Psoas muscle (tissue), 8 donors: ENCODE measurements at regions of chrX and their contacts with region 1.

Region 1: DNA sequence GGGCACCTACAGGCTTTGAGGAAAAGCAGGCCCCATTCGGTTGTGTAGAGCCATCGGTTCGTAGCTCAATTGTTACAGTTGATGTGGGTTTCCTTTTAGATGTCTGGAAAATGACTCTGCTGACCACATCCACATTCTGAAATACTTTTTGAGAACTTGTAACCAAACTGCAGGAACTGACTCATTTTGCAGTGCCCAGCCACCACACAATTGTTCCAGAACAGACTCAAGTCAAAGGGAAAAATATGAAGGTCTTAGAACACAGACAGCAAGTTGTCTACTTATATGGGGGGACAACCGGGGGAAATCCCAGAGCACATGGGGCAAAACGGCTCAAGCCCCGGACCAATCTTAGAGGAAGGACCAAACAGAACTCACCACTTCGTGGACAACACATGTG is 557.6 kb upstream of the DIPK2B start:
- DNase-seq: no peak
- ATAC-seq: no peak
- H3K4me3 ChIP-seq: no peak overlapping the region
- H3K27ac ChIP-seq: no peak overlapping the region
- H3K4me1 ChIP-seq: no peaks in the 10 kb centered on the region
- H3K27me3 ChIP-seq: no peaks in the 10 kb centered on the region
- CTCF ChIP-seq: no peak

Region 2: DNA sequence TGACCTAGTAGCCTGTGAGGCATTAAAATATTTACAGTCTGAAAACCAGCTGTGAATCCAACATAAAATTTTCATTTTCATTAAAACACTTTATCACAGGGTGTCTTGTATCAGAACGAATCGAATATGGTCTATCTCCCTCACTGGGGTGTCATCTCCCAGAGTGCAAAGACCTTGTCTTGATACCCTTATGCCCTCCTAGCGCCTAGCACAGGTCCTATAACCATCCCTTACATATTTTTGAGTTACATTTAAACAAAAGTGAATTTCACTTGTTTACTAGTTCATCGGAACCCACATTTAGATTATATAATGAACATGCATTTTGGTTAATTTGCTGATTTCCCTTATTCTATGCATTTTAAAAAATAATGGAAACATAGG is 571.7 kb before region 1 on chrX:
- intact Hi-C with region 1: loop called in 1 of 2 experiments (anchors 10 kb)
- DNase-seq: no peak
- ATAC-seq: peak in 2 of 4 donors; percentile 5 to 24
- H3K4me3 ChIP-seq: no peak overlapping the region
- H3K27ac ChIP-seq: no peak overlapping the region
- H3K4me1 ChIP-seq: no peaks in the 10 kb centered on the region
- H3K27me3 ChIP-seq: no peaks in the 10 kb centered on the region
- CTCF ChIP-seq: no peak

Region 3: GRCh38 chrX:45537936-45538335 is 220.4 kb before region 1 on chrX:
- intact Hi-C with region 1: no loop called
- DNase-seq: no peak
- ATAC-seq: no peak
- H3K4me3 ChIP-seq: no peak overlapping the region
- H3K27ac ChIP-seq: no peak overlapping the region
- H3K4me1 ChIP-seq: no peaks in the 10 kb centered on the region
- H3K27me3 ChIP-seq: peaks cover 0 to 16% (median 0%) of the 10 kb centered on the region in 3 donors
- CTCF ChIP-seq: no peak